ENCODE measurements at regions of chr6 and their contacts with region 1.

Region 1: GRCh38 chr6:92810913-92811312 is 608.4 kb downstream of the EPHA7 start:
- DNase-seq: peak; percentile 41
- ATAC-seq: peak; percentile 54
- H3K4me3 ChIP-seq: no peak overlapping the region
- H3K27ac ChIP-seq: no peak overlapping the region
- H3K4me1 ChIP-seq: no peaks in the 10 kb centered on the region
- H3K27me3 ChIP-seq: no peaks in the 10 kb centered on the region
- CTCF ChIP-seq: peak; percentile 65

Region 2: DNA sequence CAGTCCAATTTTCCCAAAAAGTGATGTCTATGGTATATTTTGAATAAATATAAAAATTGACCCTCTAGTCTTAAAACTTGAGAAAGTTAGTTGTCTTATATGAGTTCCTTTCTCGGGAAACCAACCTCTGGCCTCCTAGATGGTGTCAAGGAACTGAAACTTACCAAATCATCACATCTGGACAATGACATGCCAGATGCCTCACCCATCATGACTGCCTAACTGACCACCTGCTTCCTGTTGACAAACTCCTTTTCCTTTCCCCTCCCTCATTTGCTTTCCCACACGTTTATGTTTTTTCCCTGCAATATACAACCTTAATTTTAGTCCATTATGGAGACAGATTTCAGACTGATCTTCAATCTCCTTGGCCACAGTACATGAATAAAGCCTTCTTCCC is 122.6 kb before region 1 on chr6:
- CTCF ChIA-PET with region 1: no interaction called
- POLR2A ChIA-PET with region 1: no interaction called
- intact Hi-C with region 1: no loop called
- DNase-seq: no peak
- ATAC-seq: no peak
- H3K4me3 ChIP-seq: no peak overlapping the region
- H3K27ac ChIP-seq: no peak overlapping the region
- H3K4me1 ChIP-seq: peaks cover 27% of the 10 kb centered on the region
- H3K27me3 ChIP-seq: no peaks in the 10 kb centered on the region
- CTCF ChIP-seq: no peak

Region 3: GRCh38 chr6:92762443-92763273 is 48.3 kb before region 1 on chr6:
- CTCF ChIA-PET with region 1: no interaction called
- POLR2A ChIA-PET with region 1: no interaction called
- intact Hi-C with region 1: no loop called
- DNase-seq: peak; percentile 57
- ATAC-seq: peak; percentile 77
- H3K4me3 ChIP-seq: no peak overlapping the region
- H3K27ac ChIP-seq: peak overlapping the region; percentile 14; the same call in 1 of the 2 replicates
- H3K4me1 ChIP-seq: peaks cover 20% of the 10 kb centered on the region
- H3K27me3 ChIP-seq: no peaks in the 10 kb centered on the region
- CTCF ChIP-seq: no peak

Region 4: DNA sequence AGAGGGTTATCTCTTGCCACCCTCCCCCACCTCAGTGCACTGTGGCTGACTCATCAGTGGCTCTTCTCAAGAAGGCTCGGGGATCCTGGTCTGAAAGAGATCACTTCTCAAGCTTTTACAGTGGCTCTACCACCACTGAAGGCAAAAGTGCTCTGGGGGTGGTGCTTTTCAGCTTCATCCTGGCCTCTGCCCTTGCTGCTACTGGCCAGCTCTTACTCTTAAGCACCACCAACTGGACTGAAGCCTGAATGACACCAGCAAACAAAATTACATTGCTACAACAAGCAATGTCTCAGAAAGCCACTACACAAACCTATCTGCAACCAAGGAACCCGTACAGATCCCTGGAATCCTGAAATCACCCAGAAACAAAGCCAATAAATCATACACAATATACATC is 206.3 kb after region 1 on chr6:
- CTCF ChIA-PET with region 1: interaction called, 10 read pairs
- POLR2A ChIA-PET with region 1: no interaction called
- intact Hi-C with region 1: loop called (anchors 1 kb)
- DNase-seq: peak; percentile 25
- ATAC-seq: peak; percentile 51
- H3K4me3 ChIP-seq: no peak overlapping the region
- H3K27ac ChIP-seq: no peak overlapping the region
- H3K4me1 ChIP-seq: no peaks in the 10 kb centered on the region
- H3K27me3 ChIP-seq: no peaks in the 10 kb centered on the region
- CTCF ChIP-seq: peak; percentile 51

Measured in PC-3 (cell line).